ENCODE measurements at regions of chr17 and their contacts with region 1.

Region 1: DNA sequence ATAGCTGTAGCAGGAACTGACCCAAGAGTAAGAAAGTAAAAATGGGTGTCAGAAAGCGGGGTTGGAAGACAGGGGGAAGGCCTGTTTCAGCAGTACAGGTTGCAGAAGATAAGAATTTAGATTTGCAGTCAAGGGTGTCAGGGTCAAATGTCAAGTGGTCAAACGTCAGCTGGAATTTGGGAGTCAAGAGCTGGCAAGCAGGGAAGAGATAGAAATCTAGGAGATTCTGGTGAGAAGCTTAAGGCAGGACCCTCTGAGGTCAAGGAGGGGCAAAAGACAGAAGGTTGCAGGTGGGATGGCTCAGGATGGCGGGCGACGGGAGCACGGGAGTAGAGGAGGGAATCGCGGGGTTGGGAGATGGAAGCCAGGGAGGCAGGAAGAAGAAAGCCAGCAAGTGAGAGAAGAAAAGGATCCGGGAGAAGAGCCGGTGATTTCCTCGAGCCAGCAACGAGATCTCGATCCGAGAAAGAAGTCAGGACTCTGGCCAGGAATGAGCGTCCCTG is 335 bp downstream of the SLC25A35 start:
- DNase-seq: no peak
- H3K4me3 Mint-ChIP-seq: peak overlapping the region; percentile 79
- H3K27ac Mint-ChIP-seq: peak overlapping the region; percentile 88
- H3K4me1 Mint-ChIP-seq: peaks cover 47% of the 10 kb centered on the region
- H3K27me3 Mint-ChIP-seq: no peaks in the 10 kb centered on the region

Region 2: DNA sequence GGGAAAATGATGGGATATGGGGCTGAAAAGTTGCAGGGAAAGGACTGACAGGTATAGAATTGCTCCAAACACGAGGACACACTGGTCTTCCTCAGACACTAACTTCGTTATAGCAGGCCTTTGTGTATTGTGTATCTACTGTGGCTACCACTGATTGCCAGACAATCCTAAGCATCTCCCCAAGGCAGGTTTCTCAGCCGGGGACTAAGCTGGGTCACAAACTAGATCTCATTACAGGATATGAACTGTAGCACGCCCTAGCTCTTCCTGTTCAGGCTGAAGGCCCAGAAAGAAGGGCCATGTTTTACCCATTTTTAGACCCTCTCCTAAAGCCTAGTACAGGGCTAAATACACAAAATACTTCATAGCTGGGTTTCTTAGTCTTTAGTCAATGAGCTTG is 11.5 kb before region 1 on chr17:
- CTCF ChIA-PET with region 1: interaction called, 10 read pairs
- POLR2A ChIA-PET with region 1: interaction called, 3 read pairs
- DNase-seq: no peak
- H3K4me3 Mint-ChIP-seq: no peak overlapping the region
- H3K27ac Mint-ChIP-seq: peak overlapping the region; percentile 76
- H3K4me1 Mint-ChIP-seq: peaks cover 26% of the 10 kb centered on the region
- H3K27me3 Mint-ChIP-seq: no peaks in the 10 kb centered on the region